Activated CD8-positive, alpha-beta T cell treated with anti-CD3 and anti-CD28 coated beads, Interleukin-2, amount 10 ng/mL, durations not matched to agents 7 days and 5 days (primary cell): ENCODE measurements at regions of chr21 and their contacts with region 1.

Region 1: GRCh38 chr21:32940079-32941014 is 85.4 kb upstream of the OLIG2 start:
- DNase-seq: peak; percentile 59
- ATAC-seq: no peak
- H3K4me3 Mint-ChIP-seq: no peak overlapping the region
- H3K27ac Mint-ChIP-seq: no peak overlapping the region
- H3K4me1 Mint-ChIP-seq: peaks cover 6% of the 10 kb centered on the region
- H3K27me3 Mint-ChIP-seq: peaks cover 5% of the 10 kb centered on the region

Region 2: GRCh38 chr21:32717851-32718316 is 222.5 kb before region 1 on chr21:
- CTCF ChIA-PET with region 1: no interaction called
- POLR2A ChIA-PET with region 1: no interaction called
- DNase-seq: no peak
- ATAC-seq: no peak
- H3K4me3 Mint-ChIP-seq: no peak overlapping the region
- H3K27ac Mint-ChIP-seq: no peak overlapping the region
- H3K4me1 Mint-ChIP-seq: peaks cover 7% of the 10 kb centered on the region
- H3K27me3 Mint-ChIP-seq: no peaks in the 10 kb centered on the region

Region 3: GRCh38 chr21:32916522-32917099 is 23.7 kb before region 1 on chr21:
- CTCF ChIA-PET with region 1: interaction called, 23 read pairs
- POLR2A ChIA-PET with region 1: no interaction called
- DNase-seq: no peak
- ATAC-seq: no peak
- H3K4me3 Mint-ChIP-seq: no peak overlapping the region
- H3K27ac Mint-ChIP-seq: no peak overlapping the region
- H3K4me1 Mint-ChIP-seq: peaks cover 24% of the 10 kb centered on the region
- H3K27me3 Mint-ChIP-seq: no peaks in the 10 kb centered on the region

Region 4: GRCh38 chr21:32929633-32930038 is 10.7 kb before region 1 on chr21:
- CTCF ChIA-PET with region 1: interaction called, 52 read pairs
- POLR2A ChIA-PET with region 1: no interaction called
- DNase-seq: no peak
- ATAC-seq: peak; percentile 31
- H3K4me3 Mint-ChIP-seq: no peak overlapping the region
- H3K27ac Mint-ChIP-seq: peak overlapping the region; percentile 74
- H3K4me1 Mint-ChIP-seq: peaks cover 42% of the 10 kb centered on the region
- H3K27me3 Mint-ChIP-seq: no peaks in the 10 kb centered on the region

Region 5: DNA sequence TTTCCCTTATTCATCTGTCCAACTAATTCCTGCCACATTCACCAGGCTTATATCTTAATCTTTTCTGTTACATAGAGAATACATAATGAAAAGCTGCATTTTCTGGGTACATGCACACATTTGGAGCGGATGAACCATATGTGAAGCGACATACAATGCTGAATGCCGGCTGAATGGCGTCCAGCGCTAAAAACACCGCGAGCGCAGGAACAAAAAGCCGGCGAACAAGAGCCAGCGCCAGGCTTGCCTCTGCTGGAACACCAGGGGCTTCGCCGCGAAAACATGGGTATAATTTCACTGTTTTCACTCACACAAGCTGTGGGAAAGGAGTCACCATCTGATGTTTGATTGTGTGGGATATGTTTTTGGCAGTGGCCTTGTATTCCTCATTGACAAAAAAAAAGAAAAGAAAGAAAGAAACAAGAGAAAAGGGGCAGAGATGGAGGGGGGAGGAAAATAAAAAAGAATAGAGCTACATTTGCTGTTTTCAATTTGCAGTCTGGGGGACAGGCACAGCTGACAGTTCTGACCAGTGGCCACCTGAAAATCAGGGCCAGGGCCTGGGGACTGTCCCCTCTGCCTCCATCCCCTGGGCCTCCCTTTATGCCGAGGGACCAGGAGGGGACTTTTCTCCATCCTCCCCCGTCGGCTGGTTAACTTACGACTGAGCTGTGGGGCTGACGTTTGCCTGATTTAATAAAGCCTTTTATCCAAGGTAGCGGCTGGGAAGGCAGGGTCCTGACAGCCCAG is 15.1 kb after region 1 on chr21:
- CTCF ChIA-PET with region 1: interaction called, 10 read pairs
- POLR2A ChIA-PET with region 1: no interaction called
- DNase-seq: no peak
- ATAC-seq: no peak
- H3K4me3 Mint-ChIP-seq: no peak overlapping the region
- H3K27ac Mint-ChIP-seq: no peak overlapping the region
- H3K4me1 Mint-ChIP-seq: no peaks in the 10 kb centered on the region
- H3K27me3 Mint-ChIP-seq: peaks cover 49% of the 10 kb centered on the region

Region 6: GRCh38 chr21:32966120-32966519 is 25.8 kb after region 1 on chr21:
- CTCF ChIA-PET with region 1: interaction called, 10 read pairs
- POLR2A ChIA-PET with region 1: no interaction called
- DNase-seq: no peak
- ATAC-seq: no peak
- H3K4me3 Mint-ChIP-seq: no peak overlapping the region
- H3K27ac Mint-ChIP-seq: no peak overlapping the region
- H3K4me1 Mint-ChIP-seq: no peaks in the 10 kb centered on the region
- H3K27me3 Mint-ChIP-seq: peaks cover 28% of the 10 kb centered on the region

Region 7: DNA sequence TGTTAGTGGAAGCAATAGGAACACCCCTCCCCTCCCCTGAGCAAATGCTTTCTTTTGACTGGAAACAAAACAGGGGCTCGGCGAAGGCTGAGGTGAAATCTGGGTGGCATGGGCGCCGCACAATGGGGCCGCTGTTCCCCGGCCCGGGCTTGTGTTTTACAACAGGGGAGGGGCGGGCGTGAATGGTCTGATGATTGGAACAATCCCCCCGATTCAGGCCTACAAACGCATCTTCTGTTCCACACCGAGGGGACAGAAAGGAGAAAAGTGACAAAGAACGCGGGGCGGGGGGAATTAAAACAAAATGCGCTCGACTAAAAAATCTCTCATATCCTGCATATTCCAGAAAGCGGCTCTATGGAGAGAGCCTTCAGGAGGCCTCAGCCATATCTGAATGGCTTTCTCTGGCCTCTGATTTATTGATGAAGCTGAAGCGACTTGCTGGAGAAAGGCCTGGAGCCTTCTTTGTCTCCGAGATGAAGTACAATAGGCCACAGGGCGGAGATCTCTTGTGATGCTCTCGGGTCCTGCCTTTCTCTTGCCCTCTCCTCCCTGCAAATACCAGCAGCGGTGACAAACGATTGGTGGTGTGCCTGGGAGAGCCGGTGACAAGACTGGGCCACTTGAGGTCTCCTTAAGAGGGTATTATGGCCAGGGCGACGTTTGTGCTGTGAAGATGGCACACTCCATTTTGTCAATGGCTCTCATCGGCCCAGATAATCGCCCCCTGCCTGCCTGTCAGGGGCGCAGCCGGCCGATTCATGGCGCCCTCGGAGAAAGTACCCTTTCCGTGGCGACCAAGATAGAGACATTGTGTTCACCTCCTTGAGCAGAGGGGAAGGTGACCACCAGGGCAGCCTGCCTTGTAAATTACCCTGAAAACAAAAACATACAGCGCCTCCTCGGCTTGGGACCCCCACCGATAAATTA is 38.3 kb after region 1 on chr21:
- CTCF ChIA-PET with region 1: interaction called, 15 read pairs
- POLR2A ChIA-PET with region 1: no interaction called
- DNase-seq: no peak
- ATAC-seq: no peak
- H3K4me3 Mint-ChIP-seq: no peak overlapping the region
- H3K27ac Mint-ChIP-seq: no peak overlapping the region
- H3K4me1 Mint-ChIP-seq: no peaks in the 10 kb centered on the region
- H3K27me3 Mint-ChIP-seq: peaks cover 22% of the 10 kb centered on the region

Region 8: GRCh38 chr21:33121715-33122475 is 181.5 kb after region 1 on chr21:
- CTCF ChIA-PET with region 1: interaction called, 11 read pairs
- POLR2A ChIA-PET with region 1: no interaction called
- DNase-seq: no peak
- ATAC-seq: no peak
- H3K4me3 Mint-ChIP-seq: no peak overlapping the region
- H3K27ac Mint-ChIP-seq: no peak overlapping the region
- H3K4me1 Mint-ChIP-seq: peaks cover 3% of the 10 kb centered on the region
- H3K27me3 Mint-ChIP-seq: peaks cover 14% of the 10 kb centered on the region

Region 9: GRCh38 chr21:33139084-33139483 is 198.7 kb after region 1 on chr21:
- CTCF ChIA-PET with region 1: no interaction called
- POLR2A ChIA-PET with region 1: no interaction called
- DNase-seq: no peak
- ATAC-seq: no peak
- H3K4me3 Mint-ChIP-seq: no peak overlapping the region
- H3K27ac Mint-ChIP-seq: no peak overlapping the region
- H3K4me1 Mint-ChIP-seq: no peaks in the 10 kb centered on the region
- H3K27me3 Mint-ChIP-seq: peaks cover 3% of the 10 kb centered on the region